Naive thymus-derived CD4-positive, alpha-beta T cell (primary cell): ENCODE measurements at regions of chr20 and their contacts with region 1.

Region 1: DNA sequence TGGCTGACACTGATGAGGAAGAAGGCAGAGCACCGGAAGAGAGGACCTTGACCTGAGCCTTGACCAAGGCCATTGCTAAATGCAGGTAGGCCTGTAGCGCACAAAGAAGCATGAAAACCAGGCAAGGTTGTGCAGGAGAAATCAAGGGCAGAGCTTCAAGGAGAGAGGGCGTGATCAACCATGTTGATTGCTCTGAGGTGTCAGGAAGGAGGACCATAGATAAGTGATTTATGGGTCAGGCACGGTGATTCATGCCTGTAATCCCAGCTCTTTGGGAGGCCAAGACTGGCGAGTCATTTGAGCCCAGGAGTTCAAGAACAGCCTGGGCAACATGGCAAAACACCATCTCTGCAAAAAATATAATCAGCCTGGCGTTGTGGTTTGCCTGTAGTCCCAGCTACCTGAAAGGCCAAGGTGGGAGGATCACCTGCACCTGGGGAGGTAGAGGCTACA is 12.4 kb downstream of the PLCG1 start:
- DNase-seq: no peak
- ATAC-seq: no peak
- H3K4me3 ChIP-seq: no peak overlapping the region
- H3K4me3 Mint-ChIP-seq: peak overlapping the region; percentile 30 to 97 (median 70)
- H3K27ac ChIP-seq: peak overlapping the region; percentile 91
- H3K27ac Mint-ChIP-seq: peak overlapping the region; percentile 77 to 100 (median 94)
- H3K4me1 ChIP-seq: peaks cover 96 to 100% of the 10 kb centered on the region in 2 donors
- H3K4me1 Mint-ChIP-seq: peaks cover 80 to 100% (median 94%) of the 10 kb centered on the region in 7 donors
- H3K27me3 ChIP-seq: no peaks in the 10 kb centered on the region
- H3K27me3 Mint-ChIP-seq: no peaks in the 10 kb centered on the region

Region 2: DNA sequence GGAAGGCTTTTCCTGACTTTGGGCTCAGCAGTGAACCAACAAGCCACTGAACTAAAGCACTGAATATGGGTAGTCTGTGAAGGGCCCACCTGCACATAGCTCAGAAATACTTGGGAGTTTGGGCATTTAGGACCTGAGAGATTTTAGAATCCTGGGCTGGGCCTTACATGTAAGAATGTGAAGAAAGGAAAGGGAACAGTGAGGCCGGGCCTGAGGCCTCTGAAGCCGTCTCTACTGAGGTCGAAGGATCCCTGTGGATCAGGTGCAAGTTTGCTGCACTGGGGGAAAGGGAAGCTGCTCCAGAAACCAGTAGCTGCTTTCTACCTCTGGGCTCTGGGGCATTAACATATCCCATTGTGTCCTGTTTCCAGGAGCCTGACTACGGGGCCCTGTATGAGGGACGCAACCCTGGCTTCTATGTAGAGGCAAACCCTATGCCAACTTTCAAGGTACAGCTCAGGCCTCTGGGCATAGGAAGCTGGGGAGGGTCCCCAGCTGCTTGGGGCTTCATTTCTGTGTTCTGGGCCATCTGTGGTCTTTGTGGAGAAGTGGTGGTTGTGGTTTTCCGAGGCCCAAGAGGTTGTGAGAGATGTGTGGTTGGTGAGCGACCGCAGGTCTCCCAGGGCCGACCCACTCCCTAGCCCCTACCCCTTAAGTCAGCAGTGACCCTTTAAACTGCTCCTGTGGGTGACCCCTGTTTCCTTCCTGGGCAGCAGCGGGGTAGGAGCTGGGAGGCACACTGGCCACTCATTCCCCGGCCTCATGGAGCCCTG is 18.0 kb after region 1 on chr20:
- CTCF ChIA-PET with region 1: interaction called, 7 read pairs
- POLR2A ChIA-PET with region 1: interaction called, 604 read pairs
- intact Hi-C with region 1: no loop called
- DNase-seq: no peak
- ATAC-seq: no peak
- H3K4me3 ChIP-seq: no peak overlapping the region
- H3K4me3 Mint-ChIP-seq: no peak overlapping the region
- H3K27ac ChIP-seq: peak overlapping the region; percentile 57
- H3K27ac Mint-ChIP-seq: peak overlapping the region; percentile 46 to 95 (median 89)
- H3K4me1 ChIP-seq: peaks cover 5 to 14% of the 10 kb centered on the region in 2 donors
- H3K4me1 Mint-ChIP-seq: peaks cover 25 to 52% (median 45%) of the 10 kb centered on the region in 7 donors
- H3K27me3 ChIP-seq: no peaks in the 10 kb centered on the region
- H3K27me3 Mint-ChIP-seq: no peaks in the 10 kb centered on the region

Region 3: DNA sequence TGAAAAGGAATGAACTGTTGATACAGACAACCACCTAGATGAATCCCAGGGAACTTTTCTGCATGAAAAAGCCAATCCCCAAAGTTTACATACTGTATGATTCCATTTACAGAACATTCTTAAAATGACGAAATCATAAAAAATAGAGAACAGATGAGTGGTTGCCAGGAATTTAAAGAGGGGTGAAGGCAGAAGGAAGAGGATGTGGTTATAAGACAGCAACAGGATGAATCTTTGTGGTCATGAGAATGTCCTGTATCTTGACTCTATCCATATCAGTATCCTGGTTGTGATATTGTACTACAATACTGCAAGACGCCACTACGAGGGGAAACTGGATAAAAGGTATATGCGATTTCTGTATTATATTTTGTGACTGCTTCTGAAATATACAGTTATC is 287.0 kb after region 1 on chr20:
- CTCF ChIA-PET with region 1: no interaction called
- POLR2A ChIA-PET with region 1: no interaction called
- intact Hi-C with region 1: loop called in 1 of 2 experiments (anchors 10 kb)
- DNase-seq: peak in 6 of 9 donors; percentile 10 to 59 (median 50)
- ATAC-seq: peak; percentile 89
- H3K4me3 ChIP-seq: no peak overlapping the region
- H3K4me3 Mint-ChIP-seq: peak overlapping the region in 9 of 10 donors; percentile 21 to 85 (median 47)
- H3K27ac ChIP-seq: no peak overlapping the region
- H3K27ac Mint-ChIP-seq: peak overlapping the region in 8 of 9 donors; percentile 6 to 92 (median 55)
- H3K4me1 ChIP-seq: peaks cover 0 to 21% of the 10 kb centered on the region in 2 donors
- H3K4me1 Mint-ChIP-seq: peaks cover 35 to 79% (median 67%) of the 10 kb centered on the region in 7 donors
- H3K27me3 ChIP-seq: no peaks in the 10 kb centered on the region
- H3K27me3 Mint-ChIP-seq: no peaks in the 10 kb centered on the region